GM12878 (cell line): ENCODE measurements at regions of chr2 and their contacts with region 1.

Region 1: GRCh38 chr2:201182650-201183364 is at the start of gene CASP10:
- DNase-seq: peak; percentile 77
- ATAC-seq: peak; percentile 80
- H3K4me3 ChIP-seq: peak within 1 kb of the TSS; percentile 70
- H3K27ac ChIP-seq: peak within 1 kb of the TSS; percentile 1; the same call in 1 of the 2 replicates
- H3K4me1 ChIP-seq: no peaks in the 10 kb centered on the region
- H3K27me3 ChIP-seq: no peaks in the 10 kb centered on the region; a peak in 2 of 4 replicates
- CTCF ChIP-seq: peak; percentile 65 to 92 (median 76); a peak in 4 of 6 replicates
- EP300 ChIP-seq: no peak
- POLR2A ChIP-seq: no peak
- RAD21 ChIP-seq: peak; percentile 87
- polyA plus RNA-seq, gene CASP10: 7.5 to 9.5 TPM

Region 2: GRCh38 chr2:200888704-200889625 is 293.8 kb before region 1 on chr2 and contains the starts of genes NIF3L1 and PPIL3:
- CTCF ChIA-PET with region 1: interaction called, 8 read pairs
- POLR2A ChIA-PET with region 1: no interaction called
- RAD21 ChIA-PET with region 1: interaction called, 10 read pairs
- SMC1A ChIA-PET with region 1: interaction called, 8 read pairs
- in situ Hi-C with region 1: no loop called
- intact Hi-C with region 1: no loop called
- DNase-seq: peak; percentile 97
- ATAC-seq: peak; percentile 92
- H3K4me3 ChIP-seq: peak within 1 kb of the TSS; percentile 84
- H3K27ac ChIP-seq: peak within 1 kb of the TSS; percentile 85
- H3K4me1 ChIP-seq: peaks cover 11% of the 10 kb centered on the region
- H3K27me3 ChIP-seq: no peaks in the 10 kb centered on the region
- CTCF ChIP-seq: no peak
- EP300 ChIP-seq: peak in 1 of 2 experiments; percentile 64; a peak in 2 of 4 replicates
- POLR2A ChIP-seq: peak; percentile 82
- RAD21 ChIP-seq: no peak
- polyA plus RNA-seq, gene NIF3L1: 58.3 to 88.2 TPM
- polyA plus RNA-seq, gene PPIL3: 71.2 to 103 TPM

Region 3: GRCh38 chr2:200963124-200963917 is 219.5 kb before region 1 on chr2 and contains the start of gene ORC2:
- CTCF ChIA-PET with region 1: interaction called, 14 read pairs
- POLR2A ChIA-PET with region 1: interaction called, 3 read pairs
- RAD21 ChIA-PET with region 1: interaction called, 5 read pairs
- SMC1A ChIA-PET with region 1: interaction called, 7 read pairs
- in situ Hi-C with region 1: no loop called
- intact Hi-C with region 1: loop called (anchors 5 kb)
- DNase-seq: peak; percentile 78
- ATAC-seq: peak; percentile 93
- H3K4me3 ChIP-seq: peak within 1 kb of the TSS; percentile 99
- H3K27ac ChIP-seq: peak within 1 kb of the TSS; percentile 67
- H3K4me1 ChIP-seq: peaks cover 7% of the 10 kb centered on the region; the same call in 1 of the 2 replicates
- H3K27me3 ChIP-seq: no peaks in the 10 kb centered on the region
- CTCF ChIP-seq: peak; percentile 58 to 73 (median 64)
- EP300 ChIP-seq: no peak
- POLR2A ChIP-seq: peak; percentile 94
- RAD21 ChIP-seq: peak; percentile 52
- polyA plus RNA-seq, gene ORC2: 6.1 to 6.7 TPM

Region 4: GRCh38 chr2:201158111-201158929 is 24.5 kb before region 1 on chr2:
- CTCF ChIA-PET with region 1: interaction called, 14 read pairs
- POLR2A ChIA-PET with region 1: interaction called, 5 read pairs
- RAD21 ChIA-PET with region 1: interaction called, 13 read pairs
- SMC1A ChIA-PET with region 1: interaction called, 10 read pairs
- in situ Hi-C with region 1: no loop called
- intact Hi-C with region 1: no loop called
- DNase-seq: peak; percentile 77
- ATAC-seq: peak; percentile 98
- H3K4me3 ChIP-seq: no peak overlapping the region
- H3K27ac ChIP-seq: peak overlapping the region; percentile 35
- H3K4me1 ChIP-seq: peaks cover 14% of the 10 kb centered on the region
- H3K27me3 ChIP-seq: no peaks in the 10 kb centered on the region
- CTCF ChIP-seq: peak; percentile 62 to 76 (median 66)
- EP300 ChIP-seq: peak; percentile 59 to 70; a peak in 2 of 4 replicates
- POLR2A ChIP-seq: no peak
- RAD21 ChIP-seq: peak; percentile 77

Region 5: GRCh38 chr2:201203916-201204654 is 21.3 kb after region 1 on chr2:
- CTCF ChIA-PET with region 1: interaction called, 11 read pairs
- POLR2A ChIA-PET with region 1: no interaction called
- RAD21 ChIA-PET with region 1: interaction called, 4 read pairs
- SMC1A ChIA-PET with region 1: interaction called, 3 read pairs
- in situ Hi-C with region 1: no loop called
- intact Hi-C with region 1: no loop called
- DNase-seq: no peak
- ATAC-seq: no peak; the same call in 2 of the 3 replicates
- H3K4me3 ChIP-seq: no peak overlapping the region
- H3K27ac ChIP-seq: no peak overlapping the region
- H3K4me1 ChIP-seq: peaks cover 11% of the 10 kb centered on the region; the same call in 1 of the 2 replicates
- H3K27me3 ChIP-seq: no peaks in the 10 kb centered on the region; a peak in 2 of 4 replicates
- CTCF ChIP-seq: no peak
- EP300 ChIP-seq: no peak
- POLR2A ChIP-seq: no peak
- RAD21 ChIP-seq: no peak

Region 6: GRCh38 chr2:201257956-201258665 is 75.3 kb after region 1 on chr2:
- CTCF ChIA-PET with region 1: interaction called, 16 read pairs
- POLR2A ChIA-PET with region 1: no interaction called
- RAD21 ChIA-PET with region 1: interaction called, 13 read pairs
- SMC1A ChIA-PET with region 1: interaction called, 10 read pairs
- in situ Hi-C with region 1: no loop called
- intact Hi-C with region 1: no loop called
- DNase-seq: peak; percentile 79
- ATAC-seq: peak; percentile 79
- H3K4me3 ChIP-seq: peak overlapping the region; percentile 62
- H3K27ac ChIP-seq: peak overlapping the region; percentile 99
- H3K4me1 ChIP-seq: peaks cover 29% of the 10 kb centered on the region
- H3K27me3 ChIP-seq: no peaks in the 10 kb centered on the region
- CTCF ChIP-seq: 0 out of 6 replicates have a peak, but pooled peaks of 1 of the 3 experiments have one; percentile 16
- EP300 ChIP-seq: peak; percentile 64 to 97
- POLR2A ChIP-seq: peak; percentile 61
- RAD21 ChIP-seq: peak; percentile 53

Region 7: DNA sequence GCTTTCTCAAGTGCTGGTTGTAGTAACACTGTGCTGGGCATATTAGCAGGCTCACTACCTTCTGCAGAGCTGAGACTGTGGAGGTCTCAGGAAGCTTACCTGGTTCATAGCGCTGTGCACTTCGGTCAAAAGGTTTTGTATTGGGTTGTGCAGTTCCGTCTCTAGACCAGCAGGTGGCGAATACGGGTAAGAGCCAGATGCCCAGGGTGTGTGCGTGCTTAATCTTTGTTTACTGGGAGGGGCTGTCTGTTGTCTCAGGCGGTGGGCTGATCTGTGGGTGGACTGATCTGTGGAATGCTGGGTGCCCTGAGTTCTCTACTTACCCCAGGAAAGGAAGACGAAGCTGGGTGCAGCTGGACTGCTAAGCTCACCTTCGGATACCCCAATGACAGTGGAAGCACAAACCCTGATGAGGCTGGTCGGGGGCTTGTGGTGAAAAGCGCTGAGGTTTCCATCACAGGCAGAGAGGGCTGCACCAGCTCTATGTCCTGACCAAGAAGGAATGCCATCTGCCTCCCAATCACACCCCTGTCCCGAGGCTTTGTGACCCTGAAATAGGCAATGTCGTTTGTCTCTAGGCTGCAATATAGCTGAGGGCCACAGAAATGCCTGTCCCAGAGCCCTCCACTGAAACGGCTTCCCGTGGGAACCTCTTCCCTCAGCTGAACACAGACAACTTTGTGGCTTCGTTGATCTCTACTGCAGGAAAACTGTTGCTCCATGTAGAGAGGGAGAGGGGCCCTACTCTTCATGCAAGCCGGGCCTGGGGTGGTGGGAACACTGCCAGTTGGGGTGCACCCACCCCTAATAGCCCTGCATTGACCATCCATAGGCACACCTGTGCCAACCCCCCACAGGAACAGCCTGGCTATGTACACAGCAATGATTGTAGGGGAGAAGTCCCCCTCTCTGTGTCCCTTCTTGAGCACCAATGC is 1406.1 kb after region 1 on chr2:
- CTCF ChIA-PET with region 1: no interaction called
- POLR2A ChIA-PET with region 1: no interaction called
- RAD21 ChIA-PET with region 1: no interaction called
- SMC1A ChIA-PET with region 1: no interaction called
- in situ Hi-C with region 1: no loop called
- intact Hi-C with region 1: no loop called
- DNase-seq: peak; percentile 35
- ATAC-seq: peak; percentile 99
- H3K4me3 ChIP-seq: no peak overlapping the region
- H3K27ac ChIP-seq: no peak overlapping the region
- H3K4me1 ChIP-seq: peaks cover 3% of the 10 kb centered on the region
- H3K27me3 ChIP-seq: no peaks in the 10 kb centered on the region
- CTCF ChIP-seq: peak; percentile 90 to 92 (median 90)
- EP300 ChIP-seq: peak in 1 of 2 experiments; percentile 29; a peak in 1 of 4 replicates
- POLR2A ChIP-seq: no peak
- RAD21 ChIP-seq: peak; percentile 94